ENCODE measurements at regions of chr13 and their contacts with region 1.

Region 1: GRCh38 chr13:79480954-79481684 is at the start of gene NDFIP2:
- DNase-seq: peak; percentile 97
- H3K4me3 Mint-ChIP-seq: peak within 1 kb of the TSS; percentile 90
- H3K27ac Mint-ChIP-seq: peak within 1 kb of the TSS; percentile 98
- H3K4me1 Mint-ChIP-seq: peaks cover 57% of the 10 kb centered on the region
- H3K27me3 Mint-ChIP-seq: peaks cover 3% of the 10 kb centered on the region
- total RNA-seq, gene NDFIP2: 258 and 272 TPM in 2 replicates

Region 2: GRCh38 chr13:79405829-79406596 is 75.1 kb before region 1 on chr13 and contains the start of gene RBM26:
- intact Hi-C with region 1: loop called (anchors 1 kb)
- DNase-seq: peak; percentile 98
- H3K4me3 Mint-ChIP-seq: no peak within 1 kb of the TSS
- H3K27ac Mint-ChIP-seq: peak within 1 kb of the TSS; percentile 98
- H3K4me1 Mint-ChIP-seq: peaks cover 37% of the 10 kb centered on the region
- H3K27me3 Mint-ChIP-seq: no peaks in the 10 kb centered on the region
- total RNA-seq, gene RBM26: 96.6 and 100 TPM in 2 replicates

Region 3: DNA sequence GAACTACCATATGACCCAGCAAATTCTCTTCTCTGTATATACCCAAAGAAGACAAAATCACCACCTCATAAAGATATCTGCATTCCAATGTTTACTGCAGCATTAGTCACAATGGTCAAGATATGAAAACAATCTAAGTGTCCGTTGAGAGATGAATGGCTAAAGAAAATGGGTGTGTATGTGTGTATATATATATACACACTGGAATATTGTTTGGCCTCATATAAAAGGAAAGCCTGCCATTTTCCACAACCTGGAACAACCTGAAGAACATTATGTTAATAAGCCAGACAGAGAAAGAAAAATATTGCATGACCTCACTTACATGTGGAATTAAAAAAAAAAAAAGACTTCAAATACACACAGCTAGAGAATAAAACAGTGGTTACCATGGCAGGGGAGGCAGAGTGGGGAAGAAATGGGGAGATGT is 45.5 kb before region 1 on chr13:
- intact Hi-C with region 1: loop called (anchors 1 kb)
- DNase-seq: no peak
- H3K4me3 Mint-ChIP-seq: no peak overlapping the region
- H3K27ac Mint-ChIP-seq: no peak overlapping the region
- H3K4me1 Mint-ChIP-seq: peaks cover 17% of the 10 kb centered on the region
- H3K27me3 Mint-ChIP-seq: no peaks in the 10 kb centered on the region

Region 4: GRCh38 chr13:79468819-79469218 is 12.3 kb before region 1 on chr13:
- intact Hi-C with region 1: loop called (anchors 1 kb)
- DNase-seq: no peak
- H3K4me3 Mint-ChIP-seq: no peak overlapping the region
- H3K27ac Mint-ChIP-seq: peak overlapping the region; percentile 27
- H3K4me1 Mint-ChIP-seq: peaks cover 20% of the 10 kb centered on the region
- H3K27me3 Mint-ChIP-seq: no peaks in the 10 kb centered on the region

Region 5: GRCh38 chr13:79522583-79522982 is 41.5 kb after region 1 on chr13:
- intact Hi-C with region 1: loop called (anchors 1 kb)
- DNase-seq: peak; percentile 87
- H3K4me3 Mint-ChIP-seq: peak overlapping the region; percentile 75
- H3K27ac Mint-ChIP-seq: peak overlapping the region; percentile 96
- H3K4me1 Mint-ChIP-seq: peaks cover 29% of the 10 kb centered on the region
- H3K27me3 Mint-ChIP-seq: no peaks in the 10 kb centered on the region

Measured in activated CD4-positive, alpha-beta T cell treated with anti-CD3 and anti-CD28 coated beads, Interleukin-2, amount 10 ng/mL, durations not matched to agents 24 days and 14 days (primary cell).